CD4-positive, alpha-beta memory T cell (primary cell): ENCODE measurements at regions of chr1 and their contacts with region 1.

Region 1: DNA sequence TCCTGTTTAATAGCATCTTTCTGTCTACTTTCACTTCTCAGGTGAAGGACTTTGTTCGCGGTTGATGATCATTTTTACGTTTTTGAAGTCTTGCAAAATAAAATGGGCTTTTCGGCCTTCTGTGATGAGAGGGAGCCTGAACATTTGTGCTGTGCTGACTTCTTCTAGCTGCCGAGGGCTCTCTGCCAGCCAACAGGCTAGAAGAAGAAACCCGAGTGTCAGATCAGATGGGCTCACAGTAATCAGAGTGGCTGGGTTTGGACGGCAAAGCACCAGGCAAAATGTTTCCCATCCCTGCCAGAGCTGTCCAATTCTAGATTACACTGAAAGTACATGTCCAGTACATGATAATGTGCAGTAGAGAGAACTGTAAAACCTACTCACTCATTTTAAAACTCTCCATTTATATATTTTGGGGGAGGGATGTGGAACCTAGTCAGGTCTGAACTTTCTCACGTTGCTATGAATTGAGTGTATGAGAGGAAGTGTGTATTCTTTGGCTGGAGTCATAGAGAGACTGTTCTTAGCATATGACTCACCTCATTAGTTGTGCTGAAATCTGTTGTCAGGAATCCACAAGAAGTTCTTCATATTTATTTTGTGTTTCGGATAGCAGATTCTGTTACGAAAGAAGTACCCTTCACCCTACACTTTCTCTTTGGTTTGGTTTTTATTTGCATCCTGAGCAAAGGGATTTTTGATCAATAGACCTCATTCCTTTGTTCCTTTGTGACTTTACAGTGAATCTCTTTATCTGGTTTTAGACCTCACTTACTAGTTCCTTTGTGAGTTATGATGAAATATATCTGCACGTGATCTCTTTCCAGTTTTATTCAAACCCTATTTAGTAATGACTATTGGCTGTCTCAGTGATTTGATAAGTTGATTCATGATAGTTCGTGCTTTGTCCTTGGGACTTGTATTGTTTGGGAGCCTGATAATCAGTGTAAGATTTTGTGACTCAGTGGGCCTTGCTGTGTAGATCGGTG is 4.8 kb downstream of the ATP1A1 start:
- DNase-seq: peak; percentile 60 to 72 (median 68)
- H3K4me3 ChIP-seq: peak overlapping the region in 1 of 2 donors; percentile 32
- H3K4me3 Mint-ChIP-seq: peak overlapping the region; percentile 81 to 99 (median 88)
- H3K27ac ChIP-seq: peak overlapping the region; percentile 71
- H3K27ac Mint-ChIP-seq: peak overlapping the region; percentile 90 to 96 (median 94)
- H3K4me1 ChIP-seq: peaks cover 84% of the 10 kb centered on the region
- H3K4me1 Mint-ChIP-seq: peaks cover 64 to 86% (median 77%) of the 10 kb centered on the region in 4 donors
- H3K27me3 ChIP-seq: no peaks in the 10 kb centered on the region
- H3K27me3 Mint-ChIP-seq: peaks cover 0 to 1% of the 10 kb centered on the region in 2 donors

Region 2: GRCh38 chr1:116151739-116152576 is 225.9 kb before region 1 on chr1:
- CTCF ChIA-PET with region 1: no interaction called
- POLR2A ChIA-PET with region 1: interaction called, 5 read pairs
- intact Hi-C with region 1: loop called (anchors 5 kb)
- DNase-seq: peak; percentile 72 to 81 (median 76)
- H3K4me3 ChIP-seq: peak overlapping the region; percentile 23 to 28
- H3K4me3 Mint-ChIP-seq: peak overlapping the region; percentile 46 to 87 (median 80)
- H3K27ac ChIP-seq: peak overlapping the region; percentile 17
- H3K27ac Mint-ChIP-seq: peak overlapping the region; percentile 81 to 93 (median 88)
- H3K4me1 ChIP-seq: peaks cover 17% of the 10 kb centered on the region
- H3K4me1 Mint-ChIP-seq: peaks cover 10 to 23% (median 15%) of the 10 kb centered on the region in 4 donors
- H3K27me3 ChIP-seq: no peaks in the 10 kb centered on the region
- H3K27me3 Mint-ChIP-seq: peaks cover 0 to 3% of the 10 kb centered on the region in 2 donors

Region 3: GRCh38 chr1:116232989-116233514 is 144.8 kb before region 1 on chr1:
- CTCF ChIA-PET with region 1: interaction called, 5 read pairs
- POLR2A ChIA-PET with region 1: interaction called, 5 read pairs
- intact Hi-C with region 1: loop called (anchors 2 kb)
- DNase-seq: peak; percentile 34 to 51 (median 44)
- H3K4me3 ChIP-seq: no peak overlapping the region
- H3K4me3 Mint-ChIP-seq: no peak overlapping the region
- H3K27ac ChIP-seq: no peak overlapping the region
- H3K27ac Mint-ChIP-seq: peak overlapping the region in 4 of 7 donors; percentile 47 to 83 (median 68)
- H3K4me1 ChIP-seq: peaks cover 10% of the 10 kb centered on the region
- H3K4me1 Mint-ChIP-seq: peaks cover 15 to 23% (median 20%) of the 10 kb centered on the region in 4 donors
- H3K27me3 ChIP-seq: no peaks in the 10 kb centered on the region
- H3K27me3 Mint-ChIP-seq: no peaks in the 10 kb centered on the region

Region 4: GRCh38 chr1:116360429-116361173 is 17.2 kb before region 1 on chr1:
- CTCF ChIA-PET with region 1: interaction called, 13 read pairs
- POLR2A ChIA-PET with region 1: interaction called, 11 read pairs
- intact Hi-C with region 1: loop called (anchors 2 kb)
- DNase-seq: peak in 4 of 5 donors; percentile 40 to 47 (median 43)
- H3K4me3 ChIP-seq: no peak overlapping the region
- H3K4me3 Mint-ChIP-seq: no peak overlapping the region
- H3K27ac ChIP-seq: no peak overlapping the region
- H3K27ac Mint-ChIP-seq: peak overlapping the region in 1 of 7 donors; percentile 22
- H3K4me1 ChIP-seq: peaks cover 6% of the 10 kb centered on the region
- H3K4me1 Mint-ChIP-seq: peaks cover 13 to 30% (median 20%) of the 10 kb centered on the region in 4 donors
- H3K27me3 ChIP-seq: no peaks in the 10 kb centered on the region
- H3K27me3 Mint-ChIP-seq: no peaks in the 10 kb centered on the region

Region 5: DNA sequence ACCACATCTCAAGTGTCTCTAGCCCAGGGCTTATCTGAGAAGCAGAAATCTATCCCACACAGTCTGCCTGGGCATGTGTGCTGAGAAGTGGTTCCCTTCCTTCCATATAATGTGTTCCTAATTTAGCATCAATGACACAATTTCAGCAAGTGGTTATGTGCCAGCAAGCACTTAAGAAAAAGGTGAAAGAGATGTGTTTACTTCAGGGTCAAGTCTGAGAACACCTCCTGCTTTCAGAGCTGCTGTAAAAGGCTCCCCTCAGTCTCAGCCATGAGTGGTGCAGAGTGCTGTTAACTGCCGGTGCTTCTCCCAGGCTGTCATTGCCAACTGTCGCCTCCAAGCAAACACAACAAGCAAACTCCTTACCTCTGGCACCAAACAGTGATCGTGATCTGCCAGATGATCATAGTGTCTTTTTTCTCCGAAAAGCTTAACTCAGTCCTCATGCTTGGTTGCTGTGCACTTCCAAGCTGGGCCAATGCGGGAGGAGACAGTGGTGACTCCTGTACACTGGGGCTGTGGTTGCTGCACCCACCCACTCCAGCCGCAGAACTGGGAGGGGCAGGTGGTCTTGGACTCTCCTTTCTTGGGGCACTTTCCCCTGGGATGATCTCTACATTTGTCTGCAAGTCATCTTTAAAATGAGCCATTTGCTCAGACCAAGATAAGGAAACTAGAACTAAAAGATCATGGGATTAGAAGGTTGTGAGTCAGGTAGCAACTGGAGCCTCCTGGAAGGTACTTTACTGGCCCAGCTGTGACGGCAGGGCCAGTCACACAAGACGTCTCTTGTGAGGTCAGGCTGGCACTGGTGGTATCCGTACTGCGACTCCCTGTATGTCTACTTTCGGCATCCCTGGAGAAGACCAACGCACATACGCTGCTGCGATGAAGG is 27.7 kb after region 1 on chr1:
- CTCF ChIA-PET with region 1: interaction called, 6 read pairs
- POLR2A ChIA-PET with region 1: interaction called, 15 read pairs
- intact Hi-C with region 1: no loop called
- DNase-seq: no peak
- H3K4me3 ChIP-seq: no peak overlapping the region
- H3K4me3 Mint-ChIP-seq: no peak overlapping the region
- H3K27ac ChIP-seq: no peak overlapping the region
- H3K27ac Mint-ChIP-seq: peak overlapping the region in 6 of 7 donors; percentile 22 to 69 (median 51)
- H3K4me1 ChIP-seq: peaks cover 11% of the 10 kb centered on the region
- H3K4me1 Mint-ChIP-seq: peaks cover 10 to 28% (median 21%) of the 10 kb centered on the region in 4 donors
- H3K27me3 ChIP-seq: no peaks in the 10 kb centered on the region
- H3K27me3 Mint-ChIP-seq: no peaks in the 10 kb centered on the region